GM10248 (cell line): ENCODE measurements at regions of chr5 and their contacts with region 1.

Region 1: DNA sequence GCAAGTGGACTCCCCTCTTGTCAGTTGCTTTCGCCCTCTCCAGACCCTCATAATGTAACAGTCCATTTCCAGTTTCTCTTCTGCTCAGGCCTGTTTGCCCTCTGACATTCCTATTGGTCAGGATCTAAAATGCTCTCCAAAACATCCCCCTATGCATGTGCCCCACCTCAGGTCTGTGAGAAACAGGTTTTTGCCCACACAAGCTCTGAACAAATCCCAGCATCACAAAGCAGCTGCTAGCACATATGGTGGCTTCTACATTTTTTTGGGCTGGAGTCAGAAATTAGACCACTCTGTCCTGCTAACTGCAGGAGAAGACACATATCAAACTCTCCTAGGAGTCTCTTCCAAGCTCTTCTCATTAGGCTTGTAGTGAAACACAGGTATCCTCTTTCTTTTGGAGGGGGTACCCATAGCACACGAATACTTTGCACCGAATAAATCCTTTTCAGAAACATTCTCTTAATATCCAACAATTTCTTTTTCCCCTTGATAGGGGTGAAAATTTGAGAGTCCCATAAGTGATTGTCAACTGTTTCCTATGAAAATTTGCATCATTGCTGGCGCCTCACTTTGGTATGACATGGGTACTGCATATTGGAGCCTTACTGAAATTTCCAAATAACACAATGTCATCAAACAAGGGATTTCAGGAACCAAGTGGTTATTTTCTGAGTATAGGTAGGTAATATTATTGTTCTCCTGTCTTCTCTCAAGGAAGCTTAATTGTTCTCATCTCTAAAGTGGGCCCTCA is 19.3 kb upstream of the HSPA9 start:
- DNase-seq: no peak
- CTCF ChIP-seq: peak; percentile 10

Region 2: GRCh38 chr5:138583984-138584637 is 10.4 kb before region 1 on chr5:
- CTCF ChIA-PET with region 1: interaction called, 41 read pairs
- POLR2A ChIA-PET with region 1: interaction called, 3 read pairs
- DNase-seq: no peak
- CTCF ChIP-seq: no peak

Region 3: DNA sequence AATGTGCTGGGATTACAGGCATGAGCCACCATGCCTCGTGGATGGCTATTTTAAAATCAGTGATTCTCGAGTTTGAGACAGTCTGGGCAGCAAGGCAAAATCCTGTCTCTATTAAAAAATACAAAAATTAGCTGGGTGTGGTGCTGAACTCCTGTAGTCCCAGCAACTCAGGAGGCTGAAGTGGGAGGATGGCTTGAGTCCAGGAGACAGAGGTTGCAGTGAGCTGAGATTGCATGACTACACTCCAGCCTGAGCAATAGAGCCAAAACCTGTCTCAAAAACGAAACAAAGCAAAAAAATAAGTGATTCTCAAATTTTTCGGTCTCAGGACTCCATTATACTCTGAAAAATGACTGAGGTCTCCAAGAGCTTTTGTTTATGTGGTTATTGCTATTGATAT is 28.6 kb after region 1 on chr5:
- CTCF ChIA-PET with region 1: no interaction called
- POLR2A ChIA-PET with region 1: no interaction called
- DNase-seq: no peak
- CTCF ChIP-seq: no peak